Activated CD4-positive, alpha-beta T cell treated with anti-CD3 and anti-CD28 coated beads for 36 hours (primary cell): ENCODE measurements at regions of chr1 and their contacts with region 1.

Region 1: GRCh38 chr1:47351305-47351704 is 17.7 kb downstream of the CMPK1 start:
- DNase-seq: no peak
- ATAC-seq: peak; percentile 97
- H3K4me3 Mint-ChIP-seq: no peak overlapping the region
- H3K27ac Mint-ChIP-seq: peak overlapping the region; percentile 87
- H3K4me1 Mint-ChIP-seq: peaks cover 28% of the 10 kb centered on the region
- H3K27me3 Mint-ChIP-seq: no peaks in the 10 kb centered on the region

Region 2: GRCh38 chr1:47179017-47179987 is 172.0 kb before region 1 on chr1:
- CTCF ChIA-PET with region 1: no interaction called
- POLR2A ChIA-PET with region 1: no interaction called
- intact Hi-C with region 1: no loop called
- DNase-seq: peak; percentile 91
- ATAC-seq: peak; percentile 90
- H3K4me3 Mint-ChIP-seq: peak overlapping the region; percentile 57
- H3K27ac Mint-ChIP-seq: no peak overlapping the region
- H3K4me1 Mint-ChIP-seq: peaks cover 8% of the 10 kb centered on the region
- H3K27me3 Mint-ChIP-seq: peaks cover 22% of the 10 kb centered on the region

Region 3: DNA sequence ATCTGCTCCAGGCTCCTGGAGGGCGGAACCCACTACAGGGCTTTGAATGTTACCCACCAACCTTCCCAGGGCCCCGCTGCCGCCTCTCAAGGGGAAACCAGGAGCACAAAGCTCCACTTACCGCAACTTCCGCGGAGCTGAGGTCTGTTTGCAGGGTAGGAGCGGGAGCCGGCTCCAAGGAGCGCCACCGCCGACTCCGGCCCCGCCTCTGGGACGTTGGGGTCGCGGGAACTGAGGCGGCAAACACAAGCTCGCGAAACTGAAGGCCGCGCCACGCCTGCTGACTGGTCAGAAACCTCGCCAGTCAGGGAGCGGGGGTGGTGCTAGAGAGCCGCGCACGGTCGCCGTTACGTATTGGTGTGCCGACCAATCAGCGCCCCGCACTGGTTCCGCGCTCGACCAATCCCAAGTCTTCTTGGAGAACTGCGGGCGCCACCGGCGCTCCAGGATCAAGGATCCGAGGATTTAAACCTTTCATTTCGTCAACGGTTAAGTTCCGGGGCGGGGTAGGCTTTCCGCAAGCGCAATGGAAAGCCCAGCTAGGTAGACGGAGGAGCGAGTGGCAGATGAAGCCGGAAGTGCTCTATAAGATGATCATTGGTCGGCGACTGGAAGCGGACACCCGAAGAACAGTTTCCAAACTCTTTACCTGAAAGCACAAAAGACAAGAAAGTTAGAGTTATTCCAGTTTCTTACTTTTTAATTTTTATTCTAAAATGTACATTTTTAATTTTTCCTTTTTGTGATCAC is 37.2 kb before region 1 on chr1 and contains the start of gene STIL:
- CTCF ChIA-PET with region 1: no interaction called
- POLR2A ChIA-PET with region 1: interaction called, 5 read pairs
- intact Hi-C with region 1: loop called (anchors 1 kb)
- DNase-seq: peak; percentile 99
- ATAC-seq: peak; percentile 97
- H3K4me3 Mint-ChIP-seq: peak within 1 kb of the TSS; percentile 84
- H3K27ac Mint-ChIP-seq: peak within 1 kb of the TSS; percentile 92
- H3K4me1 Mint-ChIP-seq: peaks cover 10% of the 10 kb centered on the region
- H3K27me3 Mint-ChIP-seq: no peaks in the 10 kb centered on the region
- total RNA-seq, gene STIL: 33.9 to 36.0 TPM

Region 4: GRCh38 chr1:47997289-47998200 is 646.2 kb after region 1 on chr1 and contains the start of gene TRABD2B:
- CTCF ChIA-PET with region 1: no interaction called
- POLR2A ChIA-PET with region 1: no interaction called
- intact Hi-C with region 1: no loop called
- DNase-seq: peak; percentile 80
- ATAC-seq: peak; percentile 92
- H3K4me3 Mint-ChIP-seq: peak within 1 kb of the TSS; percentile 53
- H3K27ac Mint-ChIP-seq: no peak within 1 kb of the TSS
- H3K4me1 Mint-ChIP-seq: peaks cover 4% of the 10 kb centered on the region
- H3K27me3 Mint-ChIP-seq: peaks cover 40% of the 10 kb centered on the region
- total RNA-seq, gene TRABD2B: not detected